CD4-positive, alpha-beta T cell (primary cell): ENCODE measurements at regions of chr18 and their contacts with region 1.

Region 1: GRCh38 chr18:63311118-63312018 is 8.2 kb downstream of the BCL2 start:
- DNase-seq: no peak
- ATAC-seq: no peak
- H3K4me3 ChIP-seq: no peak overlapping the region
- H3K4me3 Mint-ChIP-seq: no peak overlapping the region
- H3K27ac ChIP-seq: peak overlapping the region in 1 of 2 donors; percentile 19
- H3K27ac Mint-ChIP-seq: peak overlapping the region; percentile 95
- H3K4me1 ChIP-seq: peaks cover 36% of the 10 kb centered on the region
- H3K4me1 Mint-ChIP-seq: peaks cover 92% of the 10 kb centered on the region
- H3K27me3 ChIP-seq: no peaks in the 10 kb centered on the region
- H3K27me3 Mint-ChIP-seq: no peaks in the 10 kb centered on the region
- CTCF ChIP-seq: no peak

Region 2: DNA sequence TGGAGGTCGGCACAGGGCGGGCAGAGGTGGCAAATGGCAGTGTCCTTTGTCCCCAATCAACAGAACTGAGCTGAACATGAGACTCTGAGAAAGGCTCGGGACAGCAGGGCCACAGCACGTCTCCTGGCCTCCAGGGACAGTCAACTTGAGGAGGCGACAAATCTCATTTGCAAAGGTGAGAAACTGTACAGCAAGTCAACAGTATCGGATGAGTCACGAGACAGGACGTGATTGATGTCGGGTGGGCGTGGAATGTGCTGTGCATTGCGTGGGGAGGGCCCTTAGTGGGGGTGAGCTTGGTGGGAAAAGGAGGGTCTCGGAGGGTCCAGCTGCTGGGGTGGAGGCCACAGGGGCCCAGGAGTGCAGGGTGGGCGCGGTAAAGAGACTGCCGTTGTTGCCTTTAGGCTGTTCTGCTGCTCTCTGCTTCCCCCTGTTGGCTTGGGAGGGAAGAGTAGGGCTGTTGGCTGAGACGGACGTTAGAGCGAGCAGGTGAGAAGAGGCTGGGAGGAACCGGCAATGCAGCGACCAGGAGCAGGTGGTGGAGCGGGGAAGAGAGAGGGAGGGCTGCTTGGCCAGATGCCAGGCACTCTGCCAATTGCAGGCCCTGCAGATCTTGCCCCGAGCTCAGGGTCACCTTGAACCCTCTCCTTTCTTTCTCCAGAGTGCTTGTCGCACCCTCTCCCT is 156.1 kb before region 1 on chr18:
- CTCF ChIA-PET with region 1: no interaction called
- POLR2A ChIA-PET with region 1: interaction called, 10 read pairs
- intact Hi-C with region 1: no loop called
- DNase-seq: peak; percentile 63 to 90 (median 76)
- ATAC-seq: peak; percentile 75
- H3K4me3 ChIP-seq: peak overlapping the region; percentile 51
- H3K4me3 Mint-ChIP-seq: peak overlapping the region; percentile 85
- H3K27ac ChIP-seq: peak overlapping the region; percentile 95 to 96
- H3K27ac Mint-ChIP-seq: peak overlapping the region; percentile 91
- H3K4me1 ChIP-seq: peaks cover 97% of the 10 kb centered on the region
- H3K4me1 Mint-ChIP-seq: peaks cover 100% of the 10 kb centered on the region
- H3K27me3 ChIP-seq: no peaks in the 10 kb centered on the region
- H3K27me3 Mint-ChIP-seq: no peaks in the 10 kb centered on the region
- CTCF ChIP-seq: peak; percentile 94

Region 3: DNA sequence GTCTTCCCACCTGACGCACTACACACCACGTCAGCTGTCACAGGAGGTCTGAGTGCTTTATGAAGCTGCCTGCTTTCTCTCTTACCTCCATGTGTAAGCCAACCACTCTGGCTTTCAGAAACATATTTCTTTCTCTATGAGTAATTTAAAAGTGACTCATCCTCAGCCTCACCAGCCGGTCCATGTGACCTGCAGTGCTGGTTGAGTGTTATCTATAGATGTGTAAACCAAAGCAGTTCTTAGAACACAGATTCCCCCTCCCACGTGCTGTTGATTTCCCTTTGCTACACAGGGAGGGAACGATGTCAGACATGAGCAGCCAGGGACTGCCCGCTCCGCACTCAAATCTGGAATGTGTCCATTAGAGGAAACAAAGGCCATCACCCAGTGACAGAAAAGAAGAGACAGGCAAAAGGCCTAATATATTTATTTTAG is 149.6 kb before region 1 on chr18:
- CTCF ChIA-PET with region 1: no interaction called
- POLR2A ChIA-PET with region 1: interaction called, 14 read pairs
- intact Hi-C with region 1: no loop called
- DNase-seq: peak; percentile 66 to 94 (median 74)
- ATAC-seq: peak; percentile 84
- H3K4me3 ChIP-seq: peak overlapping the region; percentile 38
- H3K4me3 Mint-ChIP-seq: peak overlapping the region; percentile 65
- H3K27ac ChIP-seq: peak overlapping the region; percentile 95 to 96
- H3K27ac Mint-ChIP-seq: peak overlapping the region; percentile 91
- H3K4me1 ChIP-seq: peaks cover 81% of the 10 kb centered on the region
- H3K4me1 Mint-ChIP-seq: peaks cover 78% of the 10 kb centered on the region
- H3K27me3 ChIP-seq: no peaks in the 10 kb centered on the region
- H3K27me3 Mint-ChIP-seq: no peaks in the 10 kb centered on the region
- CTCF ChIP-seq: no peak

Region 4: DNA sequence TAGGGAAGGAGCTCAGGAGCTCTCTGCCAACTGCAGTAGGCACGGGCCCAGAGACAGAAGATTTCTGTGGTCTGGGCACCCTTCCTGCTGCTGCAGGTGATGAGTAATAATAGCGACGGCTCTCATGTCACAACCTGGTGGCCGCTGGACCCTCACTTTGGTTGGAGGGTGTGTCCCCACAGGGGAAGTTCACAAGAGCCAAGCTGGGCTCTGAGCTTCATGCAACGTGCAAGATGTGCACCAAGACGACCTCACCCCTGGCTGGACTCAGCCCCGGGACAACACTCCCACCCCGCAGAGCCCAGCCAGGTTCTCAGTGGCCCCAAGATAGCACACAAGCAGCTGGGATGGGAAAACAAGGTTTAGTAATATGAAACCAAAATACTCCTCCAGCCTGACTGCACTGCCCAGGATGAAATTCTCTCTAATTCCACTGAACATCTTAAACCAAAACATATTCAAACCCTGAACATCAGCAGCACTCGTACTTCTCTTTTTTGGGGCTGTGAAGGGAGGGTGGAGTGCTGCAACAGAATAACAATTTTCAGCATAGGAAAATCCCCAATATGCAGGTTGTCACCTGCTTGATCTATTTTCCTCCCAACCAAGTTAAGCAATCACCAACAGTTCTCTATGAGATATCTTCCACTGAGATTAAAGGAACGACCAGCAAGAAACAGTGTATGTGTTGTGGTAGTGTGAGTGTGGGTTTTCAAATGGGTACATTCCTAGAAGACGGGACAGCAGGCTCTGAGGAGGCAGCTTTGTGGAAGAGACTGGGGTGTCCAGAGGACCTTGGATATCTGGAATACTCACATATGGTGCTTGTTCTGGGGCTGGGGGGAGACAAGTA is 18.3 kb before region 1 on chr18:
- CTCF ChIA-PET with region 1: interaction called, 3 read pairs
- POLR2A ChIA-PET with region 1: interaction called, 19 read pairs
- intact Hi-C with region 1: no loop called
- DNase-seq: peak in 10 of 14 experiments; percentile 11 to 60 (median 38)
- ATAC-seq: peak; percentile 38
- H3K4me3 ChIP-seq: peak overlapping the region; percentile 6
- H3K4me3 Mint-ChIP-seq: peak overlapping the region; percentile 26
- H3K27ac ChIP-seq: peak overlapping the region; percentile 14 to 35
- H3K27ac Mint-ChIP-seq: no peak overlapping the region
- H3K4me1 ChIP-seq: peaks cover 68% of the 10 kb centered on the region
- H3K4me1 Mint-ChIP-seq: peaks cover 10% of the 10 kb centered on the region
- H3K27me3 ChIP-seq: no peaks in the 10 kb centered on the region
- H3K27me3 Mint-ChIP-seq: no peaks in the 10 kb centered on the region
- CTCF ChIP-seq: no peak

Region 5: DNA sequence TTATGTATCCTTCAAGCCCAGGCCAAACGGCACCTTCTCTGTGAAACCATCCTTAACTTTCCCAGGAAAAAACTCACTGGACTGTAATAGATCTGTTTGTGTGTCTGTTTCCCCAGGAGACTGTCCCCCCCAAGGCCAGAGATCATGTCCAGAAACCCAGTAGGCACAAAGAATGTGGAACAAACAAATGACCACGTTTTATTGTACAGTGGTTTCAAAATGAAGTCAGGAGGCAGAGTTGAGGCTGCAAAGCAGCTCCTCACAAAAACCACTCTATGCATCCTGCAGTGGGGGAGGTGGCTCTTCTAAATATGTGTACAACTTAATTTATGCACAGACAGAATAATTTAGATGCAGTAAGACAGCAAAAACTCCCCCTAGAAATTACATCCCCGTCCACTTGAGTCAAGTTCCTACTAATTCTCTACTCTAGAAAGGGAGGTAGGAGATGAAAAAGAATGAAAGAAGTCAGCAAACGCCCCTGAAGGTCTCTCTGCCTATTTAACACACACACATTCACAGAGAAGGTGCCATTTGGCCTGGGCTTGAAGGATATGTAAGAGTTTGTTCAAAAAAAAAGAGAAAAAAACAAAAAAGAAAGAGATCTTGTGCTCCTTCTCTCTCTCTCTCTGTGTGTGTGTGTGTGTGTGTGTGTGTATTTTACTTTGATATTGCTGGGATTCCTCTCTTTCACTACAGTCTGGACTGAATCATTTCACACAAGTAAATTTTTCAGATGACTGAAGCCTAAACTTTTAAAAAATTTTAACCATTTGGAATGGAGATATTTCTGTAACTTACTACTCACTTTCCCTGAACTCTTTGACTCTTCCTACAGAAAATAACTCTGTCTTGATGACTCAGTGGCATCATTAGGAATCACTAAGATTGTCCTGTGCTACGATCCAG is 11.3 kb before region 1 on chr18:
- CTCF ChIA-PET with region 1: no interaction called
- POLR2A ChIA-PET with region 1: interaction called, 19 read pairs
- intact Hi-C with region 1: loop called in 1 of 2 experiments (anchors 2 kb)
- DNase-seq: peak in 4 of 14 experiments; percentile 12 to 66 (median 34)
- ATAC-seq: peak; percentile 69
- H3K4me3 ChIP-seq: no peak overlapping the region
- H3K4me3 Mint-ChIP-seq: peak overlapping the region; percentile 47
- H3K27ac ChIP-seq: peak overlapping the region in 1 of 2 donors; percentile 27
- H3K27ac Mint-ChIP-seq: peak overlapping the region; percentile 94
- H3K4me1 ChIP-seq: peaks cover 58% of the 10 kb centered on the region
- H3K4me1 Mint-ChIP-seq: peaks cover 78% of the 10 kb centered on the region
- H3K27me3 ChIP-seq: no peaks in the 10 kb centered on the region
- H3K27me3 Mint-ChIP-seq: no peaks in the 10 kb centered on the region
- CTCF ChIP-seq: no peak